Pancreas (tissue), 10 donors: ENCODE measurements at regions of chr14 and their contacts with region 1.

Region 1: DNA sequence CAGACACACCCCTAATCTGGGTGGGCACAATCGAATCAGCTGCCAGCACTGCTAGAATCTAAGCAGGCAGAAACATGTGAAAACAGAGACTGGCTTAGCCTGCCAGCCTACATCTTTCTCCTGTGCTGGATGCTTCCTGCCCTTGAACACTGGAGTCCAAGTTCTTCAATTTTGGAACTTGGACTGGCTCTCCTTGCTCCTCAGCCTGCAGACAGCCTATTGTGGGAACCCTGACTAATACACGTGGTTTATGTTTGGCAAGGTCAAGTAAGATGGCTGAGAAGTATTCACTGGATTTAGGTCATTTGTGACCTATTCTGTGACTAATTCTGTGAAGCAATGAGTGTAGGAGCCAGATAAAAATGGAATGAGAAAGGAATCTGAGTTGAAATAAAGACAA is 11.0 kb downstream of the GPR135 start:
- DNase-seq: no peak
- ATAC-seq: peak in 3 of 4 donors; percentile 33 to 62 (median 46)
- H3K4me3 ChIP-seq: no peak overlapping the region
- H3K27ac ChIP-seq: no peak overlapping the region
- H3K4me1 ChIP-seq: no peaks in the 10 kb centered on the region
- H3K27me3 ChIP-seq: no peaks in the 10 kb centered on the region
- CTCF ChIP-seq: no peak

Region 2: DNA sequence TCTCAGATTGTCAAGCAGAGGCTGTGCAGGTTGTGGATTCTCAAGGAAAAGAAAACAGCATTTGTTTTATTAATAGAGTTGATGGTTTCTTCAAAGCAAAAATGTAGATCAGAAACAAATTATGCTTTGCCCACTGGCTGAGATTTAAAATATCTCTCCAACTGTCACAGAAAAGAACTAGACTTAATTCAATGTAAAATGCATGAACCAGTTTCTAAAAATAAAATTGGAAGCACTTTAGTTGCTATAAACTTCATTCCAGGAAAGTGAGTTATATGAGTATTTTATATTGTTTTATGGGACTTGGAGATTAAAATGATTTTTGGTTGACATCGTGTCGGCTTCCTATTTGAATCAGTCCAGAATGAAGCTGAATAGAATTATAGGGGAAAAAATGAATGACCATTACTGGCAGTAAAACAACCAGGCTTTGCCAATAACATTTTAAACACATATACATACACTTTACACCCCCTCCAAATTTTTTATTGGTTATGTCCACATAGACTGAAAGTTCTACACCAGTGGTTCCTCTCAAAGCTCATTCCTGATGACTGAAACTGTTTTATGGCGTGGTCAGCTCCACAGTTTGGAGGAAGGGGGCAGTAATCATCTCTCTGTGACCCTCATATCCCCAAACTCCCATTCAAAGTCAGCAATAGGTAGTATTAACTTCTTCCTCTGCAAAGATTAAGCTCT is 321.2 kb before region 1 on chr14:
- intact Hi-C with region 1: loop called in 1 of 3 experiments (anchors 10 kb)
- DNase-seq: no peak
- ATAC-seq: no peak
- H3K4me3 ChIP-seq: no peak overlapping the region
- H3K27ac ChIP-seq: no peak overlapping the region
- H3K4me1 ChIP-seq: no peaks in the 10 kb centered on the region
- H3K27me3 ChIP-seq: no peaks in the 10 kb centered on the region
- CTCF ChIP-seq: no peak

Region 3: DNA sequence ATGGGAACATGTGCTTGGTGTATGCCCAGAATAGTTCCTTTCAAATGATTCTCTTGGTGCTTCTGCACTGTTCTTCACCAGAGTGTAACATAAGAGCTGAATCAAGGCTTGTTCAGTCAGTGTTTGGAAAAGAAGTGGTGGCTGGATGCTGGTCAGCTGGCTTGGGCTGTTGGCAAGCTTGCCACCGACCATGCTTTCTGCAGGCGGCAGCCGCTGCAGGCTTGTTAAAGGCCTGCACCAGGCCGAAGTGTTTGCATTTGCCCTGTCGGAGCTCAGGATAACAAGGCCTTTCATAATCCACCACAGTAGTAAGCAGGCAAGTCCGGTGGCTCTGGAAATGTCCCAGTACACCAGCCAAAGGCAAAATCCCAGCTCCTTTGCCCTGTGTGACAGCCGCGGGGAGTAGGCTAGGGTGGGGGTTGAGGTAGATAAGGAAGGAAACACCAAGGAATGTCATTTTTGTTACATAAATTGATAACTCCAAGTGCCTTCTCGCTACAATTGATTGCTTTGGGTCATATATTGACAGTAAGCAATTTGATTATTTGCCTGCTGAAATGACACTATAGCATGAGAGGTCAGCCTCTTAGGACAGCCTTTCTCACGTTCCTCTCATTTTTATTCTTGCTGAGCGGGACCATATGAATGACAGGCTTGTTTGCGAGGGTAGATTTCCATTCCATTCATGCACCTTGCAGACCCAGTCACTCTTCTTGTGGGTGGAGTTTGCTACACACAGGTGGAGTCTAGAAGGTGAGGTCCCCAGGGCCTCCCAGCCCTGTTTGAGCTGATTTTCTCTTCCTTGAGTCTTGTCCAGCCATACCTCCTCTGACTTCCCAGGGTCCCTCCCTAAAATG is 238.6 kb before region 1 on chr14:
- intact Hi-C with region 1: no loop called
- DNase-seq: peak; percentile 63 to 82 (median 72)
- ATAC-seq: peak; percentile 92 to 98 (median 96)
- H3K4me3 ChIP-seq: no peak overlapping the region
- H3K27ac ChIP-seq: peak overlapping the region in 3 of 4 donors; percentile 24 to 45 (median 25)
- H3K4me1 ChIP-seq: peaks cover 0 to 26% (median 23%) of the 10 kb centered on the region in 3 donors
- H3K27me3 ChIP-seq: no peaks in the 10 kb centered on the region
- CTCF ChIP-seq: no peak

Region 4: GRCh38 chr14:59333668-59334067 is 120.5 kb before region 1 on chr14:
- intact Hi-C with region 1: no loop called
- DNase-seq: no peak
- ATAC-seq: peak; percentile 24 to 89 (median 88)
- H3K4me3 ChIP-seq: no peak overlapping the region
- H3K27ac ChIP-seq: peak overlapping the region in 1 of 4 donors; percentile 38
- H3K4me1 ChIP-seq: peaks cover 0 to 18% (median 5%) of the 10 kb centered on the region in 3 donors
- H3K27me3 ChIP-seq: no peaks in the 10 kb centered on the region
- CTCF ChIP-seq: no peak

Region 5: DNA sequence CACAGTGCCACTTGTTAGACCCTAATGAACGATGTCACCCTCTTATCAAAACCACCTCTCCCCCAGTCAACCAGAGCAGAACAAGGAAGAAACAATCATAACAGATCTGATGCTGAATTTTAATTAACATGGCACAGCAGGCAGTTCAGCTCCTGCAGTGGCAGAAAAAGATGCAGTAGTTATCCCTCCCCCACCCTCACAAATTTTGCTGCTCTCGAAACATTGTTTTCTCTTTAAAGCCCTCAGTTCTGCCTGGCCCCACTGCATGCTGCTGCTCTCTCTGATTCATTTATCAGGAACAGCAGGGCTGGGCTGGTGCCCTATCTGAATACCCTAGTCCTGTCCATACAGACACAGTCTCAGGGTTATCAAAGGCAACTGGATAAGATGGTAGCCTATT is 110.2 kb after region 1 on chr14:
- intact Hi-C with region 1: no loop called
- DNase-seq: no peak
- ATAC-seq: no peak
- H3K4me3 ChIP-seq: no peak overlapping the region
- H3K27ac ChIP-seq: no peak overlapping the region
- H3K4me1 ChIP-seq: no peaks in the 10 kb centered on the region
- H3K27me3 ChIP-seq: no peaks in the 10 kb centered on the region
- CTCF ChIP-seq: no peak